ENCODE measurements at regions of chr17 and their contacts with region 1.

Region 1: GRCh38 chr17:34199932-34200534 is 55.1 kb upstream of the CCL2 start:
- DNase-seq: peak; percentile 69 to 91 (median 79)
- H3K4me3 ChIP-seq: no peak overlapping the region
- H3K27ac ChIP-seq: no peak overlapping the region
- H3K4me1 ChIP-seq: no peaks in the 10 kb centered on the region
- H3K27me3 ChIP-seq: no peaks in the 10 kb centered on the region
- CTCF ChIP-seq: peak; percentile 100

Region 2: DNA sequence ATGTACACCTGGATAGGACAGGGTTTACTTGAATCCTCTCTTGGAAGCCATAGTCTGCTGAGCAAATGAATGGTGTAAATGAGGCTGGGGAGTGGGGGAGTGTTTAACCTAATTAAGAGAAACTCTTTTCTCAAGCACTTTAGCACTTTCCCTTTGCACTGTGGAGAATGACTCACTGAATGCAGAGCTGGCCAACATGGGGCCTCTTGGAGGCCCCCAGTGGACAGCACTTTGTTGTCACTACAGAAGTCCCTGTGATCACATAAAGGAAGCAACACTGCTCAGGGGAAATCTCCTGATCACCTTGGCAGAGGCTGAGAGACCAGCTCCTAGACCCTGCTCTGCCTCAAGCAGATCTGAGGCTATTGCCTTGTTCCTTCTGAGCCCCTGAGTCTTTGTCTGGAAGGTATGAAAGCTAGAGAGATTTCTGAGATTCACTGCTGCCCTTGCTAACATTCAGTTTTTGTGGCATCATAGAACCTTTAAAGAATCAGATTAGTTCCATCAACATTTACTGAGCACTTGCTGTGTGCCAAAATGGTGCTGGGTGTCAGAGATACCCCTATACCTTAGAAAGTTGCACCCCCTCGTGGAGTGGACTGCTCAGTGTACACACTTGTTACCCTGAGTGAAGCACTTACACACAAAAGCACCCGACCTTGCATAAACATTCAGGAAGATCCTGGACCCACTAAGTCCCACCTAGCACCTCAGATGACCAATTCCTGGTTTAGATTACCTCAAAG is 175.1 kb before region 1 on chr17:
- intact Hi-C with region 1: no loop called
- DNase-seq: no peak
- H3K4me3 ChIP-seq: no peak overlapping the region
- H3K27ac ChIP-seq: no peak overlapping the region
- H3K4me1 ChIP-seq: no peaks in the 10 kb centered on the region
- H3K27me3 ChIP-seq: no peaks in the 10 kb centered on the region
- CTCF ChIP-seq: no peak

Region 3: DNA sequence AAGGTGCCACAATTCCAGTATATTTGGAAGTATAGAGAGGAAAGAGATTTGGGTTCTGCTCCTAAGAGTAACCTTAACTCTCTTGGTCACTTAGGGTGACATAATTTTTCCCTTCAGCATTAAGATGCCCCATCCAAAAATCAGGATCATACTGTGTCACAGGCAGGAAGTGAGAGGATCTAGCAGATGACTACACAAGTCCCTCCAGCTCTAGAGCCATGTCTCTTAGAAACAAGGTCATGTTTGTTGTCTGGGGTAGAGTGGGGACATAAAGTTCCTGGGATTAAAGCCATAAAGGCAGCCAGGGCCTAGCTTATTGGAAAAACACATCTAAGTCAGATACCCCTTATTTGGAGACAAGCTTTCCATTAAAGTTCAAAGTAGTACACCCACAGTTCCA is 121.9 kb after region 1 on chr17:
- intact Hi-C with region 1: no loop called
- DNase-seq: no peak
- H3K4me3 ChIP-seq: no peak overlapping the region
- H3K27ac ChIP-seq: no peak overlapping the region
- H3K4me1 ChIP-seq: no peaks in the 10 kb centered on the region
- H3K27me3 ChIP-seq: no peaks in the 10 kb centered on the region
- CTCF ChIP-seq: no peak

Region 4: DNA sequence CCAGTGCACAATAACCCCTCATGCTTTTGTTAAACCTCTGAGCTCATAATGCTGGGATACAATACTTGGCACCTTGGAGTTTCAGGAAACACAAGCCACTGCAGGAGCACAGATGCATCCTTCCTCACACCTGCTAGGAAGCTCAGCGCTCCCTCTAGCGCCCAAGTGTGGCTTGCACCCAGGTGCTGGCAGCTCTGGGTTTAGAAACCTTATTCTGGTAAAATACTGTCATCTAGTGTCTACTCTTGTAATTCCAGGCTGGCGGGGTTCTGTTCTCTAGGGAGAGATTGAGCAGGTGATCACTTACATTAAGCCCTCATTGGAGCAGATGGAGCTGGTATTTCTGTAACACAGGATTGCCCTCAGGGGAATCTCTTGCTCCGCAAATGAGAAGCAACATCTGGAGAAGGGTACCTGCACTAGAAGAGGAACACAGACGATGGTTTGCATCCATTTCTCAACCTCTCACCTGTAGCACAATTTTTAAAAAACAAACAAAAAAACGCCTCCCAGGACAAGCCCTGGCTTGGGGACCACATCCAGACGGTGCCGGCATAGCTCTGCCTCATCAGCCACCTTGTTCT is 161.5 kb after region 1 on chr17:
- intact Hi-C with region 1: loop called (anchors 5 kb)
- DNase-seq: peak; percentile 91 to 95 (median 94)
- H3K4me3 ChIP-seq: no peak overlapping the region
- H3K27ac ChIP-seq: no peak overlapping the region
- H3K4me1 ChIP-seq: no peaks in the 10 kb centered on the region
- H3K27me3 ChIP-seq: no peaks in the 10 kb centered on the region
- CTCF ChIP-seq: peak; percentile 100

Measured in kidney (tissue), 22 donors.